Head of caudate nucleus (tissue), 42 donors: ENCODE measurements at regions of chr2 and their contacts with region 1.

Region 1: GRCh38 chr2:148644883-148645538 is 460 bp downstream of the EPC2 start:
- DNase-seq: peak; percentile 91 to 98 (median 96)

Region 2: GRCh38 chr2:148282201-148282600 is 362.8 kb before region 1 on chr2:
- intact Hi-C with region 1: no loop called
- DNase-seq: no peak

Region 3: DNA sequence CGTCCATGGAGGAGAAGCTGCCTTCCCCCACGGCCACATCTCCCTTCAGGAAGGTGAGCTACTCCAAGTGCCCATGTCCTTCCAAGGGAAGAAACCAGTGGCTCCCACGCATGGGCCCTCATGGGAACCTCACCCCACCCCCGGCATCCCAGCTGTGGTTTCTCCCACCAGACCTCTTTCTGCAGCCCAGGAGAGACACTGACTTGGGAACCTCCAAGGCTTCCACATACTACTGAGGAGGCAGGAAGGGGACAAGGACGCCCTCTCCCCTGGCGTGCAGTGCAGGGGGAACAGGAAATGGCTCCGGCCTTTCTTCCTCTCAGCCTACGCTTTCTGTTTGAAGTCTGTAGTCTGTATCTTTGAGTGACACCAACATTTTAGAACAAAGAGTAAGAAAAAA is 105.0 kb before region 1 on chr2:
- intact Hi-C with region 1: no loop called
- DNase-seq: no peak

Region 4: DNA sequence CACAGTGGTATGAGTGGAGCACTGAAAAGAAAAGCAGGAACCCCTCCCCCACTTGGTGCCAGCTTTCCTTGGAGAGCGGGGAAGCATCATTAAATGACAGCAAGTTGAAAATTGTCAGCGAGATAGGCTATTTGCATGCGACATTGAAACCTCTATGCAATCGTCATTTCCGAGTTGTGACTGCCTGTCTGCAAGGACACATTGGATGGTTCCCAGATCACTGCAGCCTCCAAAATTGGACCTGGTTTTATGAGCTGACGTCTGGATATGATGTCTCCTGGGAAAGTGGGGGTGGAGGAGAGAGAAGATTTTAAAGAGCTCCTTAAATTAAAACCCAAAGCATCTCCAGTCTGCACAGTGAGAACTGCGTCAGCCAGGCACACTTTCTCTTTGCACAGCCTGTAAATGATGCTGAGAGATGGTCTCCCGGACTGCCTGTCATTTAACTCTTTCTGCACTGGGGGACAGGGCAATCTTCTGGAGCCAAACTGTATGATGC is 172.2 kb after region 1 on chr2:
- intact Hi-C with region 1: loop called (anchors 5 kb)
- DNase-seq: peak in 40 of 42 donors; percentile 17 to 79 (median 44)

Region 5: DNA sequence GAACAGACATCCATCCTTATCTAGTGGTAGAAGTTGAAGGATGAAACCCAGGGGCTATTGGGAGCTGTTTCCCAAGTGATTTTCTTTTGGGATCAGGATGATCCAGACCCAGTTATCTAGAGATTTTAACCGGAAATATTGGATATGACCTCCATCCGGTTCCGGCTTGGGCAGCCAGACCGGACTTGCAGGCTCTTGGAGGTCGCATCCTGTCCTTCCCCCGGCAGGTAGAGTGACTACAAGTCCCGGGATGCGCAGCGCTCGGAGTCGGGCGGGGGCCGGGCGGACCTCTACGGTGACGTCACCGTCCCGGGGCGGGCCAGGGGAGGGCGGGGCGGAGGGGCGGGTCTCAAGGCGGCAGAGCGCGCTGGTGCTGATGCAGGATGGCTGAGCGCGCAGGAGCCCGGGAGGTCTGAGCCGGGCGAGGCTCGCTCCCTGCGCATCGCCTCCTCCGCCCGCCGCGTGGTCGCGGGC is 229.9 kb after region 1 on chr2 and contains the start of gene KIF5C:
- intact Hi-C with region 1: loop called (anchors 5 kb)
- DNase-seq: peak; percentile 82 to 98 (median 94)

Region 6: GRCh38 chr2:148965623-148966437 is 320.8 kb after region 1 on chr2:
- intact Hi-C with region 1: loop called (anchors 5 kb)
- DNase-seq: no peak